HepG2 (cell line): ENCODE measurements at regions of chr2 and their contacts with region 1.

Region 1: DNA sequence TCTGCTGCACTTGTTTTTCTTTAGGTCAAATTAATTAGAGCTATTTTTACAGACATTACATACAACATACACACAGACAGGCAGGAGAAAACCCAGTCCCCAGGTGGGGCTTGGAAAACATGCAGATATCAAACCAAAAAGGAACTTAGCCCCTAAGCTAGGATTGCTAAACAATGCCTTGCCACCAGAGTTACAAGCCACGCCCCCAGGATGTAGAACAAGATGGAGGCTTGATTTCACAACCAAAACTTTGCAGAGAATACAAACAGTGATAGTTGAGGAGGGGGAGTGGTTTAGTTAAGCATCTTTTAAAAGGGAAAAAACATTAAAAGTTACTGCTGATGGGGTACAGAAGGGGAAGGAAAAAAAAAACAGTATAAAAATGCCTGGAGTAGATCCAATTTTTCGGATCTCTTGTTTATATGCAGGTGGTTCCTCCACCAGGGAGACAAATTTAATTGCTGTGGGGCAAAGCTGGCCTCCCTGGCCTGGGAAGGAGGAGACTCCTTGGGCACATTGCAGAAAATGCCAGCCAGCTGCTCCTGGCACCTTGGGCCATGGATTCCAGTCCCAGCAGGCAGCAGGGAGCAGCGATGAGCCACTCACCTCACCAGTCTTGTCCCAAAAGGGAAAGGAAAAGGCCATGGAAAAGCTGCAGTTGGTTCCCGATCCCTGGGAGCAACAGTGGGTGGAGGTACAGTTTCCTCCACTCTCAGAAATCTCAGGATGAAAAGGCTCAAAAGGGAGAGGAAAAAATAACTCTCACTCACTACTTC is 348.4 kb upstream of the REG3G start:
- DNase-seq: peak; percentile 20
- ATAC-seq: no peak; the same call in 1 of the 3 replicates
- H3K4me3 ChIP-seq: 0 out of 6 replicates have a peak overlapping the region, but pooled peaks of 1 of the 3 experiments have one; percentile 19
- H3K27ac ChIP-seq: no peak overlapping the region
- H3K4me1 ChIP-seq: peaks cover 16% of the 10 kb centered on the region
- H3K27me3 ChIP-seq: peaks cover 0 to 7% of the 10 kb centered on the region in 2 experiments; a peak in 2 of 5 replicates
- CTCF ChIP-seq: peak; percentile 31
- EP300 ChIP-seq: no peak
- POLR2A ChIP-seq: no peak
- RAD21 ChIP-seq: no peak

Region 2: DNA sequence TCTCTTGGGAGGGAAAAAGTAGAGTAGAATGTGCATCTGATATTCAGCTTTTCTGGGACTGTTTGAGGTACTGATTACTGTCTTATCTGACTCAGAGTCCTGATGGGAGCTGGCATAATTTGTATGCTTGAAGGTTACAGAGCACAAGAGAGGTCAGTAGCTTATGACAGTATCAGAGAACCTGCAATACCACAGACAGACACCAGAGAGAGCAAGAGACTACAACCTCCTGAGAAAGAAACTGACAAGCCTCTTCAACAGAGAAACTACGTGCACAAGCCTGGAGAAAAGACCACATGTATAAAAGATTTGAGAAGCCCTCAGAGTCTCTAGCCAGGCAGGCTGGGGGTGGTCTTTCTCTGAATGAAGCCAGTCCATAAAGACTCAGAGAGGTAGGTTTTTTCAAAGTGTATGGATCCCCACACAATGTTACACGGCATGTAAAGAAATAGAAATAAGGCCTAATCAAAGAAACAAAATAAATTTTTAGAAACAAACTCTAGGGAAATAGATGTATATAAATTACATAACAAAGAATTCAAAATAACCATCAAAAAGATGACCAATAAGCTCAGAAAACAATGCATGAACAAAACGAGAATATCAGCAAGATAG is 1723.3 kb before region 1 on chr2:
- CTCF ChIA-PET with region 1: no interaction called
- POLR2A ChIA-PET with region 1: no interaction called
- in situ Hi-C with region 1: no loop called
- intact Hi-C with region 1: loop called (anchors 2 kb)
- DNase-seq: peak; percentile 68
- ATAC-seq: peak; percentile 98
- H3K4me3 ChIP-seq: no peak overlapping the region
- H3K27ac ChIP-seq: no peak overlapping the region
- H3K4me1 ChIP-seq: no peaks in the 10 kb centered on the region
- H3K27me3 ChIP-seq: no peaks in the 10 kb centered on the region
- CTCF ChIP-seq: peak; percentile 88
- EP300 ChIP-seq: no peak
- POLR2A ChIP-seq: no peak
- RAD21 ChIP-seq: peak; percentile 81

Region 3: DNA sequence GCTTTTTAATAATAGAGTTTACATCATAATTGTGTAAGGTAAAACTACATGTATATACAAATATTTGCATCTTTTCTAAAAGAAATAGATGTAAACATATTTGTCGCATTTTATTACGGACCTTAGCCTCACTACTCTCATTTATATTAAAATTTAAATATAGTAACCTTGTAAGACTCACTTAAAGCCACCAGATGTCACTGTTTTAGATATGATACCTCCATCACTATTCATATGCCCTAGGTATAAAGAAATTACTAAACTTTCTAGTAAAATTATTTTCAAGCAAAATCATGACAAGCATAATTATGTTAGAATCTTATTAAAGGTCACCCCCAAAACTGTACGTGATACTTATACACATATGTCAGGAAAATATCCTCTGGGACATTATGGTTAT is 325.9 kb before region 1 on chr2:
- CTCF ChIA-PET with region 1: no interaction called
- POLR2A ChIA-PET with region 1: no interaction called
- in situ Hi-C with region 1: no loop called
- intact Hi-C with region 1: loop called (anchors 2 kb)
- DNase-seq: no peak
- ATAC-seq: no peak
- H3K4me3 ChIP-seq: no peak overlapping the region
- H3K27ac ChIP-seq: no peak overlapping the region
- H3K4me1 ChIP-seq: no peaks in the 10 kb centered on the region
- H3K27me3 ChIP-seq: no peaks in the 10 kb centered on the region
- CTCF ChIP-seq: no peak
- EP300 ChIP-seq: no peak
- POLR2A ChIP-seq: no peak
- RAD21 ChIP-seq: no peak

Region 4: GRCh38 chr2:78431242-78431641 is 245.9 kb before region 1 on chr2:
- CTCF ChIA-PET with region 1: no interaction called
- POLR2A ChIA-PET with region 1: no interaction called
- in situ Hi-C with region 1: no loop called
- intact Hi-C with region 1: loop called (anchors 1 kb)
- DNase-seq: no peak
- ATAC-seq: peak; percentile 53; the same call in 2 of the 3 replicates
- H3K4me3 ChIP-seq: no peak overlapping the region
- H3K27ac ChIP-seq: no peak overlapping the region
- H3K4me1 ChIP-seq: no peaks in the 10 kb centered on the region
- H3K27me3 ChIP-seq: no peaks in the 10 kb centered on the region
- CTCF ChIP-seq: no peak
- EP300 ChIP-seq: no peak
- POLR2A ChIP-seq: no peak
- RAD21 ChIP-seq: no peak

Region 5: GRCh38 chr2:78861546-78861945 is 184.4 kb after region 1 on chr2:
- CTCF ChIA-PET with region 1: interaction called, 10 read pairs
- POLR2A ChIA-PET with region 1: no interaction called
- in situ Hi-C with region 1: no loop called
- intact Hi-C with region 1: loop called (anchors 1 kb)
- DNase-seq: peak; percentile 51
- ATAC-seq: peak; percentile 94
- H3K4me3 ChIP-seq: no peak overlapping the region
- H3K27ac ChIP-seq: no peak overlapping the region
- H3K4me1 ChIP-seq: no peaks in the 10 kb centered on the region
- H3K27me3 ChIP-seq: 0 out of 5 replicates have a peak, but pooled peaks cover 0 to 3% of the 10 kb centered on the region in 2 experiments
- CTCF ChIP-seq: peak; percentile 71
- EP300 ChIP-seq: no peak
- POLR2A ChIP-seq: no peak
- RAD21 ChIP-seq: peak; percentile 32; the same call in 1 of the 2 replicates

Region 6: DNA sequence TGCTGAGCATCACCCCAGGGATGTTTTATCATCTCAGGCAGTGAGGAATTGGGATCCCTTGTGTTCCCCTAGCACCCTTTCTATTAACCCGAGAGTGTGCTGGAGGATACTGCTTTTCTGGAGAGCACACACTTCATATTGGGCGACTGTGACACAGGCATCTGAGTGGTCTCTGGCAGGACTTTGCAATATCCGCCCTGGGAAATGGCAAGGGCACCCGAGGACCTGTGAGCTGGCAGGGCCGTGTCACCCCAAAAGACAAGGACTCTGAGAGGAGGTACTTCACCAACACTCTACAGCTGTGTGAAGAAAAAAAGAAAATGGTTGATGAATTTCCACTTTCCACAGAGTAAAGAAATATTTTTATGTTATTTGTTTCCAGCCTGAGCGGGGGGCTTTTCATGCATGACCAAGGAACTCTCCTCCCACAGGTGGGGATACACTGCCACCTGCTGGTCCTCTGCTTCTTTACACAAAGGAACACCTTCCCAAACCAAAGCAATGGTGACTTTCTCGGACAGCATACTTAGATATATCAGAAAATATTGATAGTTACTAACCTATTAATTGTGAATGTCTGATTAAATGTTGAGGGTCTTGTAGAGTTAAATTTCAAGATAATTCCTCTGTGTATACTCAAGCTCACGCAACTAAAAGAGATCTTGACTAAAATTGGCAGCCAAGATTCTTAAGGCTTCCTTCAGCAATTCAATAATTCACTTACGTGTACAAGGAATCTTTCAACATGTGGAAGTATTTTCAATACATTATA is 302.5 kb after region 1 on chr2:
- CTCF ChIA-PET with region 1: interaction called, 40 read pairs
- POLR2A ChIA-PET with region 1: no interaction called
- in situ Hi-C with region 1: loop called (anchors 5 kb)
- intact Hi-C with region 1: loop called (anchors 1 kb)
- DNase-seq: peak; percentile 53
- ATAC-seq: peak; percentile 95
- H3K4me3 ChIP-seq: no peak overlapping the region
- H3K27ac ChIP-seq: no peak overlapping the region
- H3K4me1 ChIP-seq: no peaks in the 10 kb centered on the region
- H3K27me3 ChIP-seq: no peaks in the 10 kb centered on the region
- CTCF ChIP-seq: peak; percentile 89
- EP300 ChIP-seq: no peak
- POLR2A ChIP-seq: no peak
- RAD21 ChIP-seq: peak; percentile 83

Region 7: DNA sequence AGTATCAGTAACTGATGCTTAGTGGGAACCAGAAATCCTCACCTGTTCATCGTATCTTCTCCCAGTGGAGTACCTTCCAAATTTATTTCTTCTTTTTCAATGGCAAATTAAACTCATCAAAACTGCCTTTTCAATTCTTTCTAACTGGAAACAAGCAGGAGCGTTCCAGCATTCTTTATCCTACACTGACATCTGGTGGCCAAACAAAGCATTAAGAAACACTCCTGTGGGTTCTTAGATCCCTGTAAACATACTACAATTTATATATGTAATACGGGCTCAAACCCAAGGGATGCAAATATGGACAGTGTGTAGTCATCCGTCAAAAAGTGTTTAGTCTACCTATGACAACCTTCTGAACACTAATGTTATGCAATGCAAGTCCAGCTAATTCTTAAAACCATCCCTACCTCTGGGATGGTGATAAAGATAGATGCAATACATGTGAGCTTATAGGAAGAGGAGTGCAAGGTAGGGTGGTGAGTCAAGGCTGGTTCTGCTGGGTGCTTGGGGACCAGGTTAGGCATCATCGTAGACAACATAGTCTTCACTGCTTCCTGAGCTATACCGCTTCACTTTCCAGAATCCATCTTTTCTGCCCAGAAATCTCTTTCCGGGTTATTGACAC is 1210.8 kb after region 1 on chr2:
- CTCF ChIA-PET with region 1: interaction called, 3 read pairs
- POLR2A ChIA-PET with region 1: no interaction called
- in situ Hi-C with region 1: no loop called
- intact Hi-C with region 1: loop called (anchors 5 kb)
- DNase-seq: peak; percentile 61
- ATAC-seq: peak; percentile 93
- H3K4me3 ChIP-seq: no peak overlapping the region
- H3K27ac ChIP-seq: no peak overlapping the region
- H3K4me1 ChIP-seq: no peaks in the 10 kb centered on the region
- H3K27me3 ChIP-seq: no peaks in the 10 kb centered on the region
- CTCF ChIP-seq: peak; percentile 83
- EP300 ChIP-seq: no peak
- POLR2A ChIP-seq: no peak
- RAD21 ChIP-seq: peak; percentile 77